Activated naive CD4-positive, alpha-beta T cell treated with anti-CD3 and anti-CD28 coated beads for 36 hours (primary cell): ENCODE measurements at regions of chr1 and their contacts with region 1.

Region 1: DNA sequence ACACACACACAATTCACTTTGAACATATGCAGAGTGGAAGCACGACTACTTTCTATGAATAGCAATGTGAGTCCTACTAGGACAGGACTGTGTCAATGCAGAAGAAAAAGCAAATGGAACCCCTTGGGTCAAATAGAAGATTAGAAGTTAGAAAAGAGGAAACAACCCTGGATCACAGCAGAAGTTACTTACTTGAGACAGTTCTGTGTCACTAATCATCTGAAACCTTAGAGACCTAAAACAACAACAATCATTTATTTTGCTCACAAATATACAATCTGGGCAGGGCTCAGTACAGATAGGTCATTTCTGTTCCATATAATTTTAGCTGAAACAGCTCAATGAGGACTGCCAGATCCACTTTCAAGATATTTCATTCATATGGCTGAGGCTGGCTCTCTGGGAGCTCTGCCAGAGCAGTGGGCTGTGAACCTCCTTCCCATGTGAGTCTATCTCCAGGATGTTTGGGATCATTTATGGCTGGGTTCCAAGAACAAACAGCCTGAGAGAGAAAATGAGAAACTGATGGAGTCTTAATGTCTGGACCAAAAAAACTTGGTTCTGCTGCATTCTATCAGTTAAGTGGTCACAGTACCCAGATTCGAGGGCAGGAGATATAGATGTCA is 42.5 kb upstream of the IL10 start:
- DNase-seq: no peak
- H3K4me3 Mint-ChIP-seq: no peak overlapping the region
- H3K27ac Mint-ChIP-seq: no peak overlapping the region
- H3K4me1 Mint-ChIP-seq: peaks cover 21% of the 10 kb centered on the region
- H3K27me3 Mint-ChIP-seq: no peaks in the 10 kb centered on the region

Region 2: DNA sequence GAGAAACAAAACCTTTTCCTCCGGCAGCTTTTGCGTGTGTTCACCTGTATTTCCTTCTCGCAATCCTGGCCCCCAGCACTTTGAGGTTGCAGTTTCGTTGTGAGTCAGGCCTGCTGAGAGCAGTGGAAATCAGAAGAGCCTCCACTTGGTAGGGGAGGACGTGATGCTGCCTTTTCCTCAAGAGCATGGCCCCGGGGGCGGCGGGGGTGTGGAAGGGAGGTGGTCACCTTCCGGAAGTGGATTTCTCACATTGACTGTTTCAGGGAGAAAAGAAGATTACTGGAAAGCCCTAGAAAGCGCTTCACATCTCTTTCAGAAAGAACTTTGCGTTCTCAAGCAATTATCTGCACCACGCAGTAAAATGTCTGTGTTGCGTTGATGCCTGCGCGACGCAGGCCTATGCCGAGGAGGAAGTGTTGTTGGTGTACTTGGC is 30.3 kb before region 1 on chr1:
- CTCF ChIA-PET with region 1: interaction called, 6 read pairs
- intact Hi-C with region 1: loop called (anchors 1 kb)
- DNase-seq: peak; percentile 98
- H3K4me3 Mint-ChIP-seq: no peak overlapping the region
- H3K27ac Mint-ChIP-seq: peak overlapping the region; percentile 62
- H3K4me1 Mint-ChIP-seq: peaks cover 50% of the 10 kb centered on the region
- H3K27me3 Mint-ChIP-seq: peaks cover 7% of the 10 kb centered on the region

Region 3: DNA sequence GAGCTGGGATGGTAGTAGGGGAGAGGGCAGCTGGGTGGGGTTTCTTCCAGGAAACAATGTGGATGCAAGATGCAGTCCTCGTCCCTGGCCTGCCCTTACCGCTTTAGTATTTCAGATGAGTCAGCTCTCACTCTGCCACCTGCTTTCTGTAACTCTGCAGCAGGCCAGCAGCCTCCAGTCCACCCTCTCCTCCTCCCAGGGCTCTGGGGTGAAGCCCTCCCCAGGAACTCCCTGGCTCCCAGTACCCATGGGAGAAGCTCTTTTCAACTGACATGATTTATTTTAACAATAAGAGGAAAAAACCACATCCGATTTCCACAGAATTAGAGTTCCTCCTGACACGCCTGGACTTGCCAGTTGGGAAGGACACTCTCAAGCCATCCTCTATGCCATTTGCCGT is 11.6 kb after region 1 on chr1:
- CTCF ChIA-PET with region 1: interaction called, 5 read pairs
- intact Hi-C with region 1: loop called (anchors 1 kb)
- DNase-seq: no peak
- H3K4me3 Mint-ChIP-seq: no peak overlapping the region
- H3K27ac Mint-ChIP-seq: no peak overlapping the region
- H3K4me1 Mint-ChIP-seq: peaks cover 26% of the 10 kb centered on the region
- H3K27me3 Mint-ChIP-seq: no peaks in the 10 kb centered on the region

Region 4: GRCh38 chr1:206895830-206896242 is 81.0 kb after region 1 on chr1:
- CTCF ChIA-PET with region 1: no interaction called
- intact Hi-C with region 1: loop called (anchors 1 kb)
- DNase-seq: no peak
- H3K4me3 Mint-ChIP-seq: no peak overlapping the region
- H3K27ac Mint-ChIP-seq: peak overlapping the region; percentile 22
- H3K4me1 Mint-ChIP-seq: peaks cover 92% of the 10 kb centered on the region
- H3K27me3 Mint-ChIP-seq: no peaks in the 10 kb centered on the region